GM13977 (cell line): ENCODE measurements at regions of chr4 and their contacts with region 1.

Region 1: DNA sequence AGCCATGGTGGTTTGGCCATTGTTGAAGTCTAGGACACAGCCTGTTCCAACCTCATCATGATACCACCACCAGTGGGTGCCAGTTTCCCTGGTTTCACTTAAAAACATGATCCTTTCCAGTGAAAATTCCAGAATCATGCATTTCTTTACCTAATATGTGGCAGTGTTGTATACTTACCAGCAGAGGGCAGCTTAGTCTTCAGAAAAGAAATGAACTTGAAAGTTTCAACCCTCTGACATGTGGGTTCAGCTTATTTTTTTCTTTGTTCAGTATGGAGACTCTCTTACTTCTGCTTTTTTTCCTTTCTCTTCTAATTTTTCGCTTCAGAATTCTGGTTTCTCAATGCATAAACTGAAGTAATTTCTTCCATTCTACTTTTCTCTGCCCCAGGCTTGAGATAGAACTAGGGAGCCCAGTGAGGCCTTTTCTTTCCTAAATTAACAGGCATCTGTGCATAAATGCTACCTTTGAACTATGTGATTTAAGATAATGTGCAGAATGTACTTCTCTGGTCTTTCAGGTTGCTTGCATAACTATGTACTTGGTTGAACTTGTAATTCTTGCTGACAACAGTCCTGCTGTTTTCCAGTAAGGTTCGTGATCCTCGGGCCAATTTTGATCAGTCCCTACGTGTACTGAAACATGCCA is 10.7 kb downstream of the LIAS start:
- DNase-seq: peak; percentile 63
- CTCF ChIP-seq: peak; percentile 68

Region 2: DNA sequence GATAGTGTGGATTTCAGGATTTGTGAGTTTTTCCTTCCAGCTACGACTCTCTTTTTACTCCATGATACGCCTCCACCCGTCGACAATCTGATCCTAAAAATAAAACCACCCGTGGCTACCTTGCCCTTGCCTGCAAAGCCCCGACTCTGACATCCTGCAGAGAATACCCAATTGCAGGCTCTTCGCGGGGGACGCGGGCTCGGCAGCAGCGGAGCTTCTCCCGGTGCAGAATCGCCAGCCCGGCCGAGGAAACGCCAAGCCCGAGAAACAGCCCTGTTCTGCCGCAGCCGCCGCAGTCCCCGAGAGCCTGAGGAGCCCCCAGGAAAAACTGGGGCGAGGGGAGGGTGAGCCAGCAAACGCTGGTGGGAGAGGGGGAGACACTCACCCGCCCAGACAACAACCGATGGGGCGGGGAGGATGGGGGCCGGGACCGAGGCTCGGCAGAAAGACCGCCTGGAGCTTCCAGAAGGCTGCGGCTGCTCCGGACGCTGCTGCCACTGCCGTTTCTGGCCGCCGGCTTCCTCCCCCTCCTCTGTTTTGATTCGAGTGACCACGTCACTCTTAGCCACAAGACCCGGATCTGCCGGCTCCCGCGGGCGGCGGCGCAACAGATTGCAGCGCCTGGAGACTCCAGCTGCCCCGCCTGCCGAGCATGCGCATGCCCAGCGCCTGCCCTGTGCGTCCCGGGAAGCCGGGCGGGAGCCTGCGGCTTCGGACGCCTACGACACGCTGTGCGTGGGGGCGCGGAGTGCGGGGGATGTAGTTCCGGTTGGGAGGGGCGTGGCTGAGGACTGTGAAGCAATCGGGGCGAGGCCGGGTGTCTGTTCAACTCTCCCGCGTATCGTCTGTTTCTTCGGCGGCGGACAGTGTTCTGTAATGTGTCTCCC is 169.0 kb after region 1 on chr4 and contains the start of gene SMIM14:
- in situ Hi-C with region 1: loop called (anchors 10 kb)
- DNase-seq: peak; percentile 88
- CTCF ChIP-seq: no peak

Region 3: DNA sequence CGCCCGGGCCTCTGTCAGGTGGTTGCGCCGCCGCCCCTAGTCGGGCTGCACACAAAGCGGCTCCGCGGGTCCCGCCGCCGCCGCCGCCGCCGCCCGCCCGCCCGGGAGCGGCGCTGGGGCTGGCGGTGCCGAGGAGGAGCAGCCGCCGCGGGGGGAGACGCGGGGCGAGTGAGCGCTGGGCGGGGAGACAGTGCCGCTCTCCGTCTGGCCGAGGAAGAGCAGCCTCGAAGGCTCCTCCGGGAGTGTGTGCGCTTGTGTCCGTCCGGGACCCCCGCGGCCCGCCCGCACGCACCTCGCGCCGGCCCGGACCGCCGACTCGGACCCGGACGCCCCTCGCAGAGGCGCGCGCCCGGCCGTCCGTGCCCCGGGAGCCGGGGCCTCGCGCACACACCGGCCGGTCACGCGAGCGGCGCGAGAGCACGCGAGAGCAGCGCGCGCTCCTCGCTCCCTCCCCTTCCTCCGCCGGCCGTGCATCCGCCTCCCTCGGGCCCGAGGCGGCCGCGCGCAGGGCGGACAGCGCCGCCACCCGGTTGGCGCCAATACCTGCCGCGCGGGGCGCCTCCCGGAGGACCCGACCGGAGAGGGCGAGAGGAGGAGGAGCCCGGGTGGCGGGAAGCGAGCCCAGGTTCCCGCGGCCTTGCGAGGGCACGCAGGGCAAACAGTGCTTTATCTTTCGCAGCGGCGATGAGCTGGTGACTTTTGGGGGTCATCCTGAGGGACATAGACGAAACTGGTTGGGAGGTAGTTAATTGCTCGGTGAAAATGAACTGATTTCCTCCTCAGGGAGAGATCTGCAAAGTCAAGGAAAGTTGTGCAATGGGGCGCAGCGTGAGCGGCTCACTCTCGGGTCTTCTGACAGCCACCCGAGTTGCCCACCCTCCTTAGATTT is 508.2 kb after region 1 on chr4 and contains the start of gene PDS5A:
- in situ Hi-C with region 1: loop called (anchors 10 kb)
- DNase-seq: peak; percentile 97
- CTCF ChIP-seq: peak; percentile 96

Region 4: GRCh38 chr4:40212674-40213527 is 743.3 kb after region 1 on chr4:
- in situ Hi-C with region 1: no loop called
- DNase-seq: no peak
- CTCF ChIP-seq: no peak